Activated CD4-positive, alpha-beta T cell treated with anti-CD3 and anti-CD28 coated beads for 36 hours (primary cell): ENCODE measurements at regions of chr2 and their contacts with region 1.

Region 1: GRCh38 chr2:170770606-170771420 is 635 bp downstream of the ERICH2 start:
- DNase-seq: peak; percentile 83
- ATAC-seq: peak; percentile 88
- H3K4me3 Mint-ChIP-seq: peak overlapping the region; percentile 79
- H3K27ac Mint-ChIP-seq: peak overlapping the region; percentile 73
- H3K4me1 Mint-ChIP-seq: peaks cover 13% of the 10 kb centered on the region
- H3K27me3 Mint-ChIP-seq: peaks cover 8% of the 10 kb centered on the region

Region 2: DNA sequence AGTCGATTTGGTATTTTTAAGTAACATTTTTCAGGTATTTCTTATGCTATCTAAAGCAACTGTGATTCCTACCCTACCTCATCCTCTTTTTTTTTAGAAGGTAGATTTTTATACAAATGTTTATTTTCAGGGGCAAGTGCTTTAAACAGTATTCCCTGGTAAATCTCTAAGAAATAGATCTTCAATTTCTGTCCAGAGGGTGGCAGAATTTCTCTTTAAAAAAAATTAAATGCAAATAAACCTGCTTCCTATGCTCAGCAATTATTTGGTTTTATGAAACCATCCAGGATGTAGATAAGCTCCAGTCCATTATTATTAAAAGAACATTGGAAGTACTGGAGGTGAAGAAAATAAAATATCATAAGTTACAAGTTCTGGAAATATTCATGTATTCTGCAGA is 400.9 kb before region 1 on chr2:
- CTCF ChIA-PET with region 1: interaction called, 5 read pairs
- POLR2A ChIA-PET with region 1: no interaction called
- intact Hi-C with region 1: loop called in 1 of 2 experiments (anchors 1 kb)
- DNase-seq: no peak
- ATAC-seq: no peak
- H3K4me3 Mint-ChIP-seq: no peak overlapping the region
- H3K27ac Mint-ChIP-seq: no peak overlapping the region
- H3K4me1 Mint-ChIP-seq: peaks cover 42% of the 10 kb centered on the region
- H3K27me3 Mint-ChIP-seq: peaks cover 28% of the 10 kb centered on the region

Region 3: DNA sequence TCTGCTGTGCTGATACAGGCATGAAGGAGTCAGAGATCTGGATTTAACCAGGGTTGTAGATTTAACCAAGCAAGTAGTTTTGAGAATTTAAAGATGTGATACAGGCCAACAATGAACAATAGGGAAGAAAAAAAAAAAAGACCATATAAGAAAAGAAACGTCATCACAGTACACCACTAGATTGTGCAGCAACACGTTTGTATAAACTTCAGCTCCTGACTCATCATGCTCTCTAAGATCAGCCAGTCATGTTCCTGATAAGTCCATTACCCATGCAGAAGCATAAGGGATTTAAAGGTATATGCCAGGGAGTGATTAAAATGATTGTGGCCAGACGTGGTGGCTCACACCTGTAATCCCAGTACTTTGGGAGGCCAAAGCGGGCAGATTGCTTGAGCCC is 22.9 kb before region 1 on chr2:
- CTCF ChIA-PET with region 1: no interaction called
- POLR2A ChIA-PET with region 1: no interaction called
- intact Hi-C with region 1: no loop called
- DNase-seq: no peak
- ATAC-seq: no peak
- H3K4me3 Mint-ChIP-seq: no peak overlapping the region
- H3K27ac Mint-ChIP-seq: no peak overlapping the region
- H3K4me1 Mint-ChIP-seq: no peaks in the 10 kb centered on the region
- H3K27me3 Mint-ChIP-seq: peaks cover 24% of the 10 kb centered on the region

Region 4: GRCh38 chr2:171244970-171245782 is 474.4 kb after region 1 on chr2:
- CTCF ChIA-PET with region 1: no interaction called
- POLR2A ChIA-PET with region 1: no interaction called
- intact Hi-C with region 1: no loop called
- DNase-seq: no peak
- ATAC-seq: no peak
- H3K4me3 Mint-ChIP-seq: no peak overlapping the region
- H3K27ac Mint-ChIP-seq: no peak overlapping the region
- H3K4me1 Mint-ChIP-seq: peaks cover 42% of the 10 kb centered on the region
- H3K27me3 Mint-ChIP-seq: no peaks in the 10 kb centered on the region